ENCODE measurements at regions of chr16 and their contacts with region 1.

Region 1: GRCh38 chr16:74862741-74863244 is 88.2 kb upstream of the FA2H start:
- DNase-seq: peak; percentile 71
- H3K4me3 ChIP-seq: no peak overlapping the region
- H3K27ac ChIP-seq: no peak overlapping the region
- H3K4me1 ChIP-seq: no peaks in the 10 kb centered on the region
- H3K27me3 ChIP-seq: no peaks in the 10 kb centered on the region
- CTCF ChIP-seq: peak; percentile 95
- EP300 ChIP-seq: no peak
- RAD21 ChIP-seq: peak; percentile 93

Region 2: DNA sequence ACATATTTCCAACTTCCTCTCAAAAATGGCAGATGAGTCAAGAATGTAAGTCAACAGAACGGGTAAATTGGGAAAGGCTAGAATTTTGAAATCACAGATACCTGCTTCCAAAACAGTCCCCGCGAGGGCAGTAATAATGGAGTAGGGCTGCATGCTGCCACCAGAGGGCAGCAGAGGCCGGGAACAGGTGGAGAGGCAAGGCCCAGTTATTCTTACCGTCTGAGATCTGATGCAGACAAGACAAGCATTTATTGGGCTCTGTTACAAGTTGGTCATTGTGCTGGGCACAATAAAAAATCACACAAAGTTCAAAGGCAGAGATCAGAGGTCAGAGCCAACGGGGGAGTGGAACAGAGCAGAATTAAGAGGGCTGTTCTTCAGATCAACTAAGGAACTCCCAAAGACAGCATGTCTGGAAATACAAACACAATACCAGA is 153.3 kb before region 1 on chr16:
- CTCF ChIA-PET with region 1: interaction called, 192 read pairs
- POLR2A ChIA-PET with region 1: no interaction called
- DNase-seq: peak; percentile 86
- H3K4me3 ChIP-seq: no peak overlapping the region
- H3K27ac ChIP-seq: no peak overlapping the region
- H3K4me1 ChIP-seq: no peaks in the 10 kb centered on the region
- H3K27me3 ChIP-seq: no peaks in the 10 kb centered on the region
- CTCF ChIP-seq: peak; percentile 97
- EP300 ChIP-seq: no peak
- RAD21 ChIP-seq: peak; percentile 94

Region 3: DNA sequence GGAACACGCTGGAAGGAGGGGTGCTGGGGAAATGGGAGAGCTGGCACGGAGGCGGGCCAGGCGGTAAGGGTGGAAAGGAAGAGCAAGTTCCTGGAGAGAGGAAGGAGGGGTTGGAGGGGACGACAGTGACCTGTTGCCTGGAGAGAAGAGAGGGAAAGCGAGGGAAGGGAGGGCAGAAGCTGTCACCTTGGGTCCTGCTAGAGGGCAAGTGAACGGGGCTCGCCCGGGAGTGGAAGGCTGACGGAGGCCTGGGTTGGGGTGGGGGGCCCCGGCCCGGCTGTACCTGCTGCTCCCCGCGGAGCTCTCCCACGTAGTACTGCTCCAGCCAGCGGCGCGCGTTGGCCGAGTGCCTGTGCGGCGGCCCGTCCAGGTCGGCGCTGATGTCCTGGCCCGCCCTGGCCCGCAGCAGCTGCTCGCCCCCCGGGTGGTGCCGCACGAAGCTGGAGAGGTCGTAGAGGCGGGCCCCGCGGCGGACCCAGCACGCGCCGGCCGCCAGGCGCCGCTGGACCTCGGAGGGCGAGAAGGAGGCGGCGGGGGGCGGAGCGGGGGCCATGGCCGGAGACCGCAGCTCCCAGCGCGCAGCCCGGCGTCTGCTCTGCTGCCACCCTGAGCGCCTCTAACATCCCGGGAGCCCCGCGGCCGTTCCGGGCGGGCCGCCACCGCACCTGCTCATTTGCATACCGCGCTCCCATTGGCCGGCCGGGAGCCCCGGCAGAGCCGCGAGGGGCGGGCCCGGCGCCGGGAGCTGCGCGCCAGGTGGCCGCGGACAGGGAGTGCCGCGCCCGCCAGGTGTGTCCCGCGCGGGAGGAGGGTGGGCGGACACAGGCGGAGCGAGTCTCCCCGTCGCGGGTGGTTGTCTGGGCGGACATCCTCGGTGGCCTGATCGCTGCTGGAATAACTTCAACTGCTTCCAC is 88.3 kb before region 1 on chr16 and contains the start of gene FA2H:
- CTCF ChIA-PET with region 1: interaction called, 16 read pairs
- POLR2A ChIA-PET with region 1: no interaction called
- DNase-seq: peak; percentile 97
- H3K4me3 ChIP-seq: peak within 1 kb of the TSS; percentile 43 to 46
- H3K27ac ChIP-seq: no peak within 1 kb of the TSS
- H3K4me1 ChIP-seq: peaks cover 0 to 8% of the 10 kb centered on the region in 2 experiments; a peak in 1 of 4 replicates
- H3K27me3 ChIP-seq: peaks cover 23% of the 10 kb centered on the region
- CTCF ChIP-seq: peak; percentile 40
- EP300 ChIP-seq: no peak
- RAD21 ChIP-seq: no peak
- polyA plus RNA-seq, gene FA2H: not detected in 2 replicates

Region 4: DNA sequence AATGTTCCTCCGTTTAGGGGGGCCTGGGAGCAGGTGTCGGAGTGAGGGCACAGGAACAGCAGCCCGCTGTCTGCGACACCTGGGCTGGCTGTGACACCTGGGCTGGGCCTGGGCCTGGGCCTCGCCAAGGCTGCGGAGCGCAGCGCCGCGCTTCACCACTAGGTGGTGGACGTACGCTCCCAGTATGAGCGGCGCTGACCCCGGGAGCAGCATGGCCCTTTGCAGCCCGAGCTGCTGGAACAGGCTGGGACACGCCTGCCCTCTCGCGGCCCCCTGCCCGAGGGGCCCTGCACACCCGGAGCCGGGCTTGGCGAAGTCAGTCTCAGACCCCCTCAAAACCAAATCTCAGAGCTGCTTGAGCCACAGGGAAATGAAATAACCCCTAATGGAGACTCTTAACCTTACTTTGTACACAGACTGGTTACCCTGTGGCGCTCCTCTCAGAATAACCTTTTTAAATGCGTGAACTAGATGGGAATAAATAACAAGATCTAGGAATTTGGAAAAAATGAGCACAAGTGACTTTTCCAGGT is 49.6 kb before region 1 on chr16:
- CTCF ChIA-PET with region 1: interaction called, 148 read pairs
- POLR2A ChIA-PET with region 1: interaction called, 3 read pairs
- DNase-seq: peak; percentile 93
- H3K4me3 ChIP-seq: peak overlapping the region in 1 of 2 experiments; percentile 20; a peak in 1 of 4 replicates
- H3K27ac ChIP-seq: no peak overlapping the region
- H3K4me1 ChIP-seq: no peaks in the 10 kb centered on the region
- H3K27me3 ChIP-seq: no peaks in the 10 kb centered on the region; the same call in 1 of the 2 replicates
- CTCF ChIP-seq: peak; percentile 81
- EP300 ChIP-seq: no peak
- RAD21 ChIP-seq: peak; percentile 82

Region 5: GRCh38 chr16:74837056-74837455 is 25.7 kb before region 1 on chr16:
- CTCF ChIA-PET with region 1: interaction called, 37 read pairs
- POLR2A ChIA-PET with region 1: no interaction called
- DNase-seq: no peak
- H3K4me3 ChIP-seq: no peak overlapping the region
- H3K27ac ChIP-seq: no peak overlapping the region
- H3K4me1 ChIP-seq: no peaks in the 10 kb centered on the region
- H3K27me3 ChIP-seq: no peaks in the 10 kb centered on the region
- CTCF ChIP-seq: no peak
- EP300 ChIP-seq: no peak
- RAD21 ChIP-seq: no peak

Region 6: GRCh38 chr16:74886105-74886855 is 23.5 kb after region 1 on chr16:
- CTCF ChIA-PET with region 1: interaction called, 13 read pairs
- POLR2A ChIA-PET with region 1: no interaction called
- DNase-seq: no peak
- H3K4me3 ChIP-seq: no peak overlapping the region
- H3K27ac ChIP-seq: no peak overlapping the region
- H3K4me1 ChIP-seq: no peaks in the 10 kb centered on the region
- H3K27me3 ChIP-seq: no peaks in the 10 kb centered on the region
- CTCF ChIP-seq: no peak
- EP300 ChIP-seq: no peak
- RAD21 ChIP-seq: no peak